ENCODE measurements at regions of chr6 and their contacts with region 1.

Region 1: GRCh38 chr6:32984605-32985389 is 16.4 kb downstream of the BRD2 start:
- DNase-seq: peak; percentile 96 to 98 (median 97)
- ATAC-seq: peak; percentile 93
- H3K4me3 ChIP-seq: no peak overlapping the region
- H3K27ac ChIP-seq: peak overlapping the region in 2 of 4 donors; percentile 39 to 53
- H3K4me1 ChIP-seq: peaks cover 43% of the 10 kb centered on the region
- H3K27me3 ChIP-seq: no peaks in the 10 kb centered on the region
- CTCF ChIP-seq: peak; percentile 79 to 96 (median 94)
- POLR2A ChIP-seq: peak in 2 of 3 donors; percentile 7 to 15

Region 2: DNA sequence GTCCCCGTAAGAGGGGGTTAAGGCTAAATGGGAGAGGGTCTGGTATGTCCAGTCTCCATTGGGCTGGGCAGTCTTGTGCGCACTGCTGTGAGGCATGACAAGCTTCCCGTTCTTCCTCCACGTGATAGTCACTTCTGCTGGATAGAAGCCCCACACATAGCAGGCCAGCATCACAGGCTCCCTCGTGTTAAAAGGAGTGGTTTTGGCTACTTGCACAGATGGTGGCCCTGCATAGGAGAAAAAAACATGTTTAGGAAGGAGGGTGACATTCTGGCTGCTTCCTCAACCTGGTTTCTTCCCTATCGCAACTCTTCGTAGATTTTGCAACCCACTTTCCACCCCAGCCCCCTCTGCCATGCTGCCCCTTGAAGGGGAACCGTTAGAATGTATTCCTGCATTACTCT is 47.6 kb before region 1 on chr6:
- intact Hi-C with region 1: loop called (anchors 5 kb)
- DNase-seq: peak in 1 of 4 donors; percentile 67
- ATAC-seq: no peak
- H3K4me3 ChIP-seq: no peak overlapping the region
- H3K27ac ChIP-seq: peak overlapping the region in 1 of 4 donors; percentile 64
- H3K4me1 ChIP-seq: peaks cover 5% of the 10 kb centered on the region
- H3K27me3 ChIP-seq: no peaks in the 10 kb centered on the region
- CTCF ChIP-seq: no peak
- POLR2A ChIP-seq: peak in 1 of 3 donors; percentile 30